PC-9 (cell line): ENCODE measurements at regions of chr3 and their contacts with region 1.

Region 1: DNA sequence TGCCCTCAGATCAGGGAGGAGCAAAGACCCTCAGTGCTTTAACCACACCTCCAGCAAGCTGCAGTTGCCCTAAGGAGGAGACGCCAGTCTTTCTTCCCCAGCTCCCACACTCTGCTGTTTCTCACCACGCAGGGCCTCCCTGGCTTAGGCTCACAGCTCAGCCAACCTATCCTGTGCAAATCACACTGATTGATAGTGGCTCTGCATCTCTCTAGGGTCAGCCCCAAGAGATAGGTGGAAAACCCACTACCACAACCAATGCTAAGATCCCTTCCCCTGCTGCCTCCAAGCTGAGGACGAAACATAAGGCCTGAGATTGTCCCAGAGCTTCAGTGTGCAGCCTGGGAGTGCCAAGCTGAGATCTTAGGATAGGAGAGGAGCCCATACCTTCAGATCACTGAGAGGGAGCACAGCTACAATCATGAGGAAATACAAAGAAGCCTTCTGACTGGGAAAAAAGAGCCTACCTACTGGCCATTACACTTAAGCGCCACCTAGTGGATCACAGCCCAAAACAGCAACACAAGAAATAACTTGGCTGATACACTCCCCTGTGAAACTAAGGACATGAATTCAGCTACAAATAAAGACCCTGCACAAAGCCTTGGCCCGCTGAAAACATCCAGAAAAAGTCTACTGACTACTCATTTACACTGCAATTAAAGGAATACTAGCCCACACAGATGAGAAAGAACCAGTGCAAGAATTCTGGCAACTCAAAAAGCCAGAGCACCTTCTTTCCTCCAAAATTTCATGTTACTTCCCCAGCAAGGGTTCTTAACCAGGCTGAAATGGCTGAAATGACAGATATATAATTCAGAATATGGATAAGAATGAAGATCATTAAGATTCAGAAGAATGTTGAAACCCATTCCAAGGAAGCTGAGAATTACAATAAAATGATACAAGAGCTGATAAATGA is 271.5 kb upstream of the DCBLD2 start:
- DNase-seq: peak; percentile 58 to 59
- H3K4me3 ChIP-seq: no peak overlapping the region
- H3K27ac ChIP-seq: no peak overlapping the region
- H3K4me1 ChIP-seq: no peaks in the 10 kb centered on the region
- H3K27me3 ChIP-seq: no peaks in the 10 kb centered on the region
- CTCF ChIP-seq: peak; percentile 97

Region 2: DNA sequence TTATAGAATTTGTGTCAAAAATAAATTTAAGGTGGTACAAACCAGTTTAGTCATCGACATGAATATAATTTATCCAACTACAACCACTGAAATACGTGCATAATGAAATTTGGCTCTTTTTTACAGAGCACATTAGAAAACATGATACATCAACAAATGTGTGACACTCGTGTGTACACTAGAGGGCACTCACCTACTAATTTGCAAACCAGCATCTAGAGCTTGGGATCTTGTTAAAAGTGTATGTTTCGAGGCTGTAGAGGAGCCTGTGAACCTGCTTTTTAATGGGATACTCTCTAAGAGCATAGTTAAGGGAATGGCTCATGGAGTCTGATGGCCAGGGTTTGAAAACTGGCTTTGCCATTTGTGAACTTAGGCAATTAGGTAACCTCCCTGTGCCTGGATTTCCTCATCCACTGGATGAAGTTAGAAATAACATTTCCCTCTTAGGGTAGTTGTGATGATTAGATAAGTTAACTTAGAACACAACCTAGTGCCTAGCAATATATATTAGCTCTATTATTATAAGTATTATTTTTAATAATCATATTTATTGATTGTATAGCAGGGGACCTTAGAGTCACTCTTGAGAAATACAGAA is 570.8 kb before region 1 on chr3:
- CTCF ChIA-PET with region 1: no interaction called
- POLR2A ChIA-PET with region 1: no interaction called
- intact Hi-C with region 1: loop called (anchors 5 kb)
- DNase-seq: peak; percentile 29 to 61
- H3K4me3 ChIP-seq: no peak overlapping the region
- H3K27ac ChIP-seq: no peak overlapping the region
- H3K4me1 ChIP-seq: no peaks in the 10 kb centered on the region
- H3K27me3 ChIP-seq: no peaks in the 10 kb centered on the region
- CTCF ChIP-seq: peak; percentile 95

Region 3: DNA sequence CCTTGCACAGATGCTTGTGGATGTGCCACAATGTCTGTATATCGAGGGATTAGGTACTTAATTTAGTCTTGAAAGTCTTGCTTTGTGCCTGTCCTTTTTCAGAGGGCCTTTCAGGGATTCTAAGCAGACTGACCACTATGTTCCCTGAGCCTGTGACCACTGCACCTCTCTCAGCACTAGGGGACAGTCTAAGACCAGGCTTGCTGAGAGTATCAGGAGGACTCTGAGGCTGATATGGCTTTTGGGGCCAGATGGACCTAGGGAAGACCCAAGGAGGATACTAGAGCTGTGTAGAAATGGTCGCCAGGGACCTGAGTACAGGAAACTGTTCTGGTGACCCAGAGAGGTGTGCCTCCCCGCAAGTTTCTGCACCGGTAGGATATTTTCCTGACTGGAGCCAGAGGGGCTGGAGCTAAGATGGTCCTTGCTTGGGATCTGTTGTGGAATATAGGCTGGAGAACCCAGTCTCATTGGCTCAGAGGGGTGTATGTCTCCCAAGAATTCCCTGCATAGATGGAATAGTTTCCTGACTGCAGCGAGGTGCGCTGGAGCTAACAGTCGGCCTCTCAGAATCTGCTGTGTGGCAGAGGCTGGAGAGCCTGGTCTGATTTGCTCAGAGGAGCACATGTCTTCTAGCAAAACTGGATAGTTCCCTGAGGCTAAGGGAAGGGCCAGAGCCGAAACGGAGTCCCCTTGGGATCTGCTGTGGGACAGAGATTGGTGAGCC is 58.3 kb before region 1 on chr3:
- CTCF ChIA-PET with region 1: no interaction called
- POLR2A ChIA-PET with region 1: no interaction called
- intact Hi-C with region 1: loop called (anchors 1 kb)
- DNase-seq: peak in 1 of 2 experiments; percentile 19
- H3K4me3 ChIP-seq: no peak overlapping the region
- H3K27ac ChIP-seq: no peak overlapping the region
- H3K4me1 ChIP-seq: no peaks in the 10 kb centered on the region
- H3K27me3 ChIP-seq: no peaks in the 10 kb centered on the region
- CTCF ChIP-seq: peak; percentile 91

Region 4: GRCh38 chr3:99186016-99186415 is 13.0 kb after region 1 on chr3:
- CTCF ChIA-PET with region 1: no interaction called
- POLR2A ChIA-PET with region 1: no interaction called
- intact Hi-C with region 1: no loop called
- DNase-seq: no peak
- H3K4me3 ChIP-seq: no peak overlapping the region
- H3K27ac ChIP-seq: no peak overlapping the region
- H3K4me1 ChIP-seq: no peaks in the 10 kb centered on the region
- H3K27me3 ChIP-seq: no peaks in the 10 kb centered on the region
- CTCF ChIP-seq: no peak

Region 5: DNA sequence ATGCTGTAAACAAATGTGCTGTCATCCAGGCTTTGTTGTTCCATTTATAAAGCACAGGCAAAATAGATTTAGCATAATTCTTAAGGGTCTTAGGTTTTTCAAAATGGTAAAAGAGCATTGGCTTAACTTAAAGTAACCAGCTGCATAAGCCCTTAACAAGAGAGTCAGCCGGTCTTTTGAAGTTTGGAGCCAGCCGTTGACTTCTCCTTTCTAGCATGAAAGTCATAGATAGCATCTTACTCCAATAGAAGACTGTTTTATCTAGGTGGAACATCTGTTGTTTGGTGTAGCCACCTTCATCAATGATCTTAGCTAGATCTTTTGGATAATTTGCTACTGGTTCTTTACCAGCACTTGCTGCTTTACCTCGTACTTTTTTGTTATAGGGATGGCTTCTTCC is 26.0 kb after region 1 on chr3:
- CTCF ChIA-PET with region 1: no interaction called
- POLR2A ChIA-PET with region 1: interaction called, 11 read pairs
- intact Hi-C with region 1: no loop called
- DNase-seq: no peak
- H3K4me3 ChIP-seq: no peak overlapping the region
- H3K27ac ChIP-seq: no peak overlapping the region
- H3K4me1 ChIP-seq: no peaks in the 10 kb centered on the region
- H3K27me3 ChIP-seq: no peaks in the 10 kb centered on the region
- CTCF ChIP-seq: no peak

Region 6: GRCh38 chr3:99686955-99687612 is 514.1 kb after region 1 on chr3:
- CTCF ChIA-PET with region 1: no interaction called
- POLR2A ChIA-PET with region 1: no interaction called
- intact Hi-C with region 1: loop called (anchors 5 kb)
- DNase-seq: peak in 1 of 2 experiments; percentile 69
- H3K4me3 ChIP-seq: no peak overlapping the region
- H3K27ac ChIP-seq: no peak overlapping the region
- H3K4me1 ChIP-seq: no peaks in the 10 kb centered on the region
- H3K27me3 ChIP-seq: no peaks in the 10 kb centered on the region
- CTCF ChIP-seq: peak; percentile 98